ENCODE measurements at regions of chr7 and their contacts with region 1.

Region 1: GRCh38 chr7:4830176-4830575 is 31.7 kb downstream of the PAPOLB start:
- DNase-seq: peak; percentile 84
- ATAC-seq: peak; percentile 85 to 89

Region 2: GRCh38 chr7:4566714-4567113 is 263.5 kb before region 1 on chr7:
- intact Hi-C with region 1: no loop called
- DNase-seq: no peak
- ATAC-seq: no peak

Region 3: GRCh38 chr7:4659551-4660286 is 170.5 kb before region 1 on chr7:
- intact Hi-C with region 1: no loop called
- DNase-seq: no peak
- ATAC-seq: no peak

Region 4: GRCh38 chr7:4883374-4884144 is 53.4 kb after region 1 on chr7 and contains the start of gene RADIL:
- intact Hi-C with region 1: loop called (anchors 5 kb)
- DNase-seq: peak; percentile 96
- ATAC-seq: peak; percentile 93 to 98
- total RNA-seq, gene RADIL: 6.8 to 7.8 TPM

Region 5: GRCh38 chr7:5083311-5083711 is 253.1 kb after region 1 on chr7:
- intact Hi-C with region 1: loop called in 1 of 2 experiments (anchors 10 kb)
- DNase-seq: no peak
- ATAC-seq: no peak